ENCODE measurements at regions of chr12 and their contacts with region 1.

Region 1: GRCh38 chr12:123150744-123151456 is at the start of gene PITPNM2:
- DNase-seq: peak in 1 of 2 donors; percentile 79
- H3K4me3 ChIP-seq: peak within 1 kb of the TSS; percentile 82 to 90
- H3K27ac ChIP-seq: peak within 1 kb of the TSS; percentile 86 to 88
- H3K4me1 ChIP-seq: peaks cover 2 to 18% of the 10 kb centered on the region in 2 donors
- H3K27me3 ChIP-seq: no peaks in the 10 kb centered on the region
- CTCF ChIP-seq: peak in 1 of 3 experiments; percentile 56
- total RNA-seq, gene PITPNM2: 8.4 TPM

Region 2: GRCh38 chr12:123062681-123063486 is 88.0 kb before region 1 on chr12:
- intact Hi-C with region 1: loop called (anchors 2 kb)
- DNase-seq: peak; percentile 53 to 83
- H3K4me3 ChIP-seq: no peak overlapping the region
- H3K27ac ChIP-seq: peak overlapping the region; percentile 75 to 94
- H3K4me1 ChIP-seq: peaks cover 29 to 58% of the 10 kb centered on the region in 2 donors
- H3K27me3 ChIP-seq: no peaks in the 10 kb centered on the region
- CTCF ChIP-seq: no peak

Region 3: DNA sequence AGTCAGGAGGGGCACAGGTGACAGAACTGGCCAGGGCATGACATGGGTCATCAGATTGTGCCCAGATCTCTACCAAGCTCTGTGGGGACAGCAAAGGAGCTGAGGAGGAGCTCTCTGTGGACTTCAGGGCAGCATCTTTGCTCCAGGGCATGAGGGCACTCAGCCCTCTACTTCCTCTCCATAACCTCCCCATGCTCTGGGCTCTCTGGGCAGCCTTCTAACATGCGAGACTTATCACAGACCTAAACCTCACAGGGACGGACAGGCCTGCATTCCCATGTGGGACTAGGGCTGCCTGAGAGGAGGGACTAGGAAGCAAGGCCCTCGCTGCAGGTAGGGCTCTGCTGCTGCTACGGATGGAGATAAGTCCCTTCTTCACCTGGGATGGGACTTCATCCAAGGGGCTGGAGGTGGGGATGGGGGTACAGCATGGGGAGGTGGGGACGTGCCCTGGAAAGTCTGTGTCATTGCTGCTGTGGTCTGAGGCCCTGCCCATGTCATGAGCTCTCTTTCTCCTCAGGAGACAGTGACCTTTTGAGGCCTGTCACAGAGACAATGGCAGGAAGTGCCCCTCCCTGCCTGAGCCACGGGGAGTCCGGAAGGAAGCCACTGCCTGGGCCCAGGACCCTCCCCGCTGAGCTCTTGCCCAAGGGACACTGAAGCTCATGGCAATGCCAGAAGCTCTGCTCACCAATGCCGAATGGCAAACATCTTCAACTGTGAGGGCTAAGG is 44.1 kb before region 1 on chr12:
- intact Hi-C with region 1: no loop called
- DNase-seq: no peak
- H3K4me3 ChIP-seq: no peak overlapping the region
- H3K27ac ChIP-seq: no peak overlapping the region
- H3K4me1 ChIP-seq: peaks cover 7 to 11% of the 10 kb centered on the region in 2 donors
- H3K27me3 ChIP-seq: no peaks in the 10 kb centered on the region
- CTCF ChIP-seq: no peak

Region 4: GRCh38 chr12:123436017-123436964 is 285.4 kb after region 1 on chr12 and contains the start of gene RILPL2:
- intact Hi-C with region 1: no loop called
- DNase-seq: peak; percentile 79 to 96
- H3K4me3 ChIP-seq: peak within 1 kb of the TSS; percentile 77 to 92
- H3K27ac ChIP-seq: peak within 1 kb of the TSS; percentile 86 to 90
- H3K4me1 ChIP-seq: peaks cover 10 to 33% of the 10 kb centered on the region in 2 donors
- H3K27me3 ChIP-seq: no peaks in the 10 kb centered on the region
- CTCF ChIP-seq: no peak
- total RNA-seq, gene RILPL2: 7.2 TPM

Region 5: GRCh38 chr12:123670882-123671728 is 520.2 kb after region 1 on chr12 and contains the start of gene TCTN2:
- intact Hi-C with region 1: no loop called
- DNase-seq: peak; percentile 72 to 97
- H3K4me3 ChIP-seq: peak within 1 kb of the TSS; percentile 76 to 88
- H3K27ac ChIP-seq: no peak within 1 kb of the TSS
- H3K4me1 ChIP-seq: peaks cover 6 to 13% of the 10 kb centered on the region in 2 donors
- H3K27me3 ChIP-seq: no peaks in the 10 kb centered on the region
- CTCF ChIP-seq: no peak
- total RNA-seq, gene TCTN2: 2.7 TPM